ENCODE measurements at regions of chr22 and their contacts with region 1.

Region 1: GRCh38 chr22:30289134-30289979 is at the start of gene CASTOR1:
- DNase-seq: peak; percentile 98
- ATAC-seq: peak; percentile 90 to 91
- H3K4me3 ChIP-seq: peak within 1 kb of the TSS; percentile 74 to 97 (median 90)
- H3K27ac ChIP-seq: peak within 1 kb of the TSS; percentile 84 to 90 (median 87)
- H3K4me1 ChIP-seq: peaks cover 22 to 26% of the 10 kb centered on the region in 2 donors
- H3K27me3 ChIP-seq: no peaks in the 10 kb centered on the region
- CTCF ChIP-seq: no peak
- POLR2A ChIP-seq: peak; percentile 57 to 77
- total RNA-seq, gene CASTOR1: 3.5 to 6.5 (median 5.6) TPM

Region 2: GRCh38 chr22:30305519-30305905 is 16.2 kb after region 1 on chr22:
- in situ Hi-C with region 1: no loop called
- intact Hi-C with region 1: loop called (anchors 2 kb)
- DNase-seq: peak; percentile 39 to 73
- ATAC-seq: peak; percentile 72 to 77
- H3K4me3 ChIP-seq: no peak overlapping the region
- H3K27ac ChIP-seq: peak overlapping the region; percentile 67 to 86 (median 70)
- H3K4me1 ChIP-seq: peaks cover 61 to 87% of the 10 kb centered on the region in 2 donors
- H3K27me3 ChIP-seq: no peaks in the 10 kb centered on the region
- CTCF ChIP-seq: no peak
- POLR2A ChIP-seq: peak; percentile 17 to 49

Region 3: DNA sequence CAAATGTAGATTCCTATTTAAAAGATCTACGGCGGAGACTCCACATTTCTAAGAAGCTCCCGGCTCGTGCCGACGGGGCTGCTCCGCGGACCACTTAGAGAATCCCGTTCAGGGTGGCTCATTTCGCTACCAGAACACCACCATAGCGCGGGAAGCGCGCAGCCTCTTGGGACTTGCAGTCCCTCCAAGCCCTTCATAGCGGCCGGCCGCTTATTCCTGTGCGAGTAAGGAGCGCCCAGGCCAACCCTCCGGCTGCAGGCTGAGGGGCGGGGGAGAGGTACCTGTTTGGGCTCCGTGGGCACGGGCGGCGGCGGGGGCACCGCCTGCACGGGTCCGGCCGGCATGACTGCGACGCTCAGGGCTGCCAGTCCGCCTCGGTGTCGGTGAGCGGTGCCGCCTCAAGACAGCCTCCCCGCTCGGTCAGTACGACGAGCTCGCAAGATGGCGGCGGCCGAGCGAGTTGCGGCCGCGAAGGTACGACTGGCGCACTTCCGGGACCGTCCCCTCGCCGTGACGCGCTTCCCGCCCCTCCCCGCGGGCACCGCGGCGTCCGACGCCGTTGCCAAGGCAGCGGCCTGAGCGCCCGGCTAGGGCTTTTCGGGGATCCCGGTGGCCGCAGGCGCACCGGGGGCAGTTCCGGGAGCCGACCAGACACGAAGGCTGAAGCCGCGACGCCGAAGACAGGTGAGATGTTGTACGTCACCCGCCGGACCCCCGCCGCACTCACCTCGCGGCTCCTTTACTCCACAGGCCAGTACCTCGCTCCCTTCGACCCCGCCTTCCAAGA is 67.3 kb after region 1 on chr22 and contains the starts of genes CCDC157 and SF3A1:
- in situ Hi-C with region 1: loop called in 1 of 4 experiments (anchors 10 kb)
- intact Hi-C with region 1: loop called (anchors 1 kb)
- DNase-seq: peak; percentile 75 to 81
- ATAC-seq: peak; percentile 98
- H3K4me3 ChIP-seq: peak within 1 kb of the TSS; percentile 78 to 98 (median 92)
- H3K27ac ChIP-seq: peak within 1 kb of the TSS; percentile 93 to 97 (median 94)
- H3K4me1 ChIP-seq: peaks cover 23 to 32% of the 10 kb centered on the region in 2 donors
- H3K27me3 ChIP-seq: no peaks in the 10 kb centered on the region
- CTCF ChIP-seq: no peak
- POLR2A ChIP-seq: peak; percentile 85 to 86
- total RNA-seq, gene CCDC157: 0.41 to 1.4 (median 1.1) TPM
- total RNA-seq, gene SF3A1: 36.0 to 145 (median 94.5) TPM

Region 4: DNA sequence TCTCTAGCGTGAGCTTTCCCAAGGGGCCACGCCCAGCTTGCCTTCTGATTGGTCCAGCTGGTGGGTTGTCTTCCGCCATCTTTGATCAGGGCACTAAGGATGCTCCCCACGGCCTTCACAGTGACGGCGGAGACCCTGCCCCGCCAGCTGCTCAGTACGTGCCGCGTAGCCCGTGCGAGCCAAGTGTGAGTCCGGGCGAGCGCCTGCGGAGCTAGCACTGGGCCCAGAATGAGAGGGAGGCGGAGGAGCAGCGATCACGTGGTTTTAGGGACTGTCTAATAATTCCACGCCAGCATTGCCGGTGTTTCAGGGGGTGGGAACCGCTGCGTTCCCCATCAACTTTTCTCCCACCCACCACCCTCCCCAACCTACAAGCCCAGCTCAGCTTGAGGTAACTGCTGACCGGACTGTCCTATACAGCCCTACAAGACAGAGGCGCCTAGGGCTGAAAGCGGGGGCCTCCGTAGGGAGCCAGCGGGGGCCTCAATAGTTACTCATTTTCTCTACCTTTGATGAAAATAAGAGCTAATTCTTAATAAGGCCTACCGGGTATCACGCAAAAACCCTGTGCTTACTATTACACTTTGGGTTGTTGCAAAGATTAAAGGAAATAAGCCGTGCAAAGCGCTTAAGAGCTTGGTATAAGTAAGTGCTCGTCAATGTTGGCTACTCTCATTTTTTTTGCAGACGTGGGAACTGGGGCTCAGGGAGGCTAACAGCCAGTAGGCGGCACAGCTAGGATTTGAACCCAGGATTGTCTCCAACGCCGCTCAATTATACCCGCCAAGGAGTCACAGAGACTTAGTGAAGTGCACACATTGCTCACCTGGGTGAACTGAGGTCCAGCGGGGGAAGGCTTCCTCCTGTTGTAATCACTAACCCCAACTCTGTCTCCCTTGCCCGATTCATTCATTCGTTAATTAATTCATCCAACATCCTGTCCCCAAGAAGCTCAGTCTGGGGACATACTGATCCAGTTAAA is 134.9 kb after region 1 on chr22:
- in situ Hi-C with region 1: no loop called
- intact Hi-C with region 1: loop called (anchors 1 kb)
- DNase-seq: peak; percentile 99
- ATAC-seq: peak; percentile 80 to 89
- H3K4me3 ChIP-seq: peak overlapping the region; percentile 60 to 96 (median 78)
- H3K27ac ChIP-seq: peak overlapping the region; percentile 92 to 100 (median 99)
- H3K4me1 ChIP-seq: peaks cover 31 to 32% of the 10 kb centered on the region in 2 donors
- H3K27me3 ChIP-seq: no peaks in the 10 kb centered on the region
- CTCF ChIP-seq: no peak
- POLR2A ChIP-seq: peak in 1 of 2 donors; percentile 73

Measured in gastrocnemius medialis (tissue), 4 donors.